ENCODE measurements at regions of chr12 and their contacts with region 1.

Region 1: GRCh38 chr12:43878050-43878449 is 42.2 kb downstream of the TMEM117 start:
- DNase-seq: no peak
- ATAC-seq: no peak

Region 2: DNA sequence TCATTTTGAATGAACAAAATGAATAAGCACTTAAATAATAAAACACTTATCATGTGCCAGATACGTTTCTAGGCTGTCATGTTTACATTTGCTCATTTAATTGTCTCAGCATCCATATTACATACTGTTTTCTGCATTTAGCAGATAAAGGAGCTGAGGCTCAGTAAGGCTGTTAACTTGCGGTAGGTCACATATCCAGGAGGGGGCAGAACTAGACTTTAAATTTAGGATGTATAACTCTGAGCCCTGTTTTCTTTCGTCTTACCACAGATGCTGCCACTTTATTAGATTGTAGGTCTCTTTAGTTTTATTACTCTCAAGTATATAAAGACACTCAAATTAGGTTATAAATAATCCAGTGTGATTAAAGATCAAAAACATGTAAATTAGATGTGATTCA is 101.6 kb before region 1 on chr12:
- intact Hi-C with region 1: loop called (anchors 10 kb)
- DNase-seq: no peak
- ATAC-seq: no peak

Region 3: GRCh38 chr12:43805860-43806736 is 72.0 kb before region 1 on chr12 and contains the start of gene TWF1:
- intact Hi-C with region 1: loop called (anchors 10 kb)
- DNase-seq: peak; percentile 94
- ATAC-seq: peak; percentile 100
- total RNA-seq, gene TWF1: 12.4 TPM

Region 4: DNA sequence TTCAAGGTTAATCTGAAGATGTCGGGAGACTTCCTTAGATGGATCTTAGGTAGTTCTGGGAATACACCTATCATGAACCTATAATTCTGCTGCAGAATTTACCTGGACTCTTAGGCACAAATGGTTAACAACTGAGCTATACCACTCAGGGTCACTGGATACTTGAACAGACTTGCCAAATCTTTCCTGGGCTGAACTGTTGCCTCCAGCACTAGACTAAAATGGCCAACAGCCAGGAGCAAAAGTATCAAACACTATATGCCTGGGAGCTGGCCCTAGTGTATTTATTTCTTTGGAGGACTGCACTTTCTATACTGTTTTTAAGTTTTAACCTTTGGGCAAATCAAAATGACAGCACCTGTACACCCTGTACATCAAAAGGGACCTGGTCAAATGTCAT is 210.6 kb after region 1 on chr12:
- intact Hi-C with region 1: no loop called
- DNase-seq: no peak
- ATAC-seq: peak; percentile 76